ENCODE measurements at regions of chr10 and their contacts with region 1.

Region 1: GRCh38 chr10:23630880-23631279 is 192.0 kb downstream of the OTUD1 start:
- DNase-seq: peak; percentile 47
- H3K4me3 ChIP-seq: no peak overlapping the region
- H3K27ac ChIP-seq: no peak overlapping the region
- H3K4me1 ChIP-seq: no peaks in the 10 kb centered on the region
- H3K27me3 ChIP-seq: no peaks in the 10 kb centered on the region
- CTCF ChIP-seq: no peak

Region 2: DNA sequence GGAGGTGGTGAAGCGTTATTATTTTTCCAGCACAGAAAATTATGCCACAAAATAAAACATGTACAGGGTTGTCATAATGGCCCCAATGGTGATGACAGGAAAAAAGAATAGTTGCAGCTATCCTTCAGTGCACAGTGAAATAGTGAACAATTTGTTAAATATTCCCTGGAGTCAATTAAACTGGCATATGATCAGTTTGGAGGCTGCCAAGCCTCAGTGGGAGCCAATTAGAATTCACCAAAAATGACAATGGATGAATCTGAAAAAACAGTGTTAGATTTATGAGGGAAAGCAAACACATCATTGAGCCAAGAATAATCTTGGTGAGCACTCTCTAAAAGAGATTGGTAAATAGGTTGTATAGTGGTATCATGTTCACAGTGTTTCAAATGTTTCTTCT is 45.7 kb before region 1 on chr10:
- CTCF ChIA-PET with region 1: no interaction called
- POLR2A ChIA-PET with region 1: no interaction called
- intact Hi-C with region 1: loop called (anchors 5 kb)
- DNase-seq: peak; percentile 44
- H3K4me3 ChIP-seq: no peak overlapping the region
- H3K27ac ChIP-seq: no peak overlapping the region
- H3K4me1 ChIP-seq: peaks cover 3% of the 10 kb centered on the region
- H3K27me3 ChIP-seq: no peaks in the 10 kb centered on the region
- CTCF ChIP-seq: no peak